GM12878 (cell line): ENCODE measurements at regions of chr1 and their contacts with region 1.

Region 1: GRCh38 chr1:156129706-156130581 is 15.4 kb downstream of the LMNA start:
- DNase-seq: no peak
- ATAC-seq: peak; percentile 29
- H3K4me3 ChIP-seq: no peak overlapping the region
- H3K27ac ChIP-seq: peak overlapping the region; percentile 56
- H3K4me1 ChIP-seq: peaks cover 47% of the 10 kb centered on the region
- H3K27me3 ChIP-seq: no peaks in the 10 kb centered on the region
- CTCF ChIP-seq: peak; percentile 90 to 97 (median 96)
- EP300 ChIP-seq: no peak
- POLR2A ChIP-seq: no peak
- RAD21 ChIP-seq: peak; percentile 96

Region 2: DNA sequence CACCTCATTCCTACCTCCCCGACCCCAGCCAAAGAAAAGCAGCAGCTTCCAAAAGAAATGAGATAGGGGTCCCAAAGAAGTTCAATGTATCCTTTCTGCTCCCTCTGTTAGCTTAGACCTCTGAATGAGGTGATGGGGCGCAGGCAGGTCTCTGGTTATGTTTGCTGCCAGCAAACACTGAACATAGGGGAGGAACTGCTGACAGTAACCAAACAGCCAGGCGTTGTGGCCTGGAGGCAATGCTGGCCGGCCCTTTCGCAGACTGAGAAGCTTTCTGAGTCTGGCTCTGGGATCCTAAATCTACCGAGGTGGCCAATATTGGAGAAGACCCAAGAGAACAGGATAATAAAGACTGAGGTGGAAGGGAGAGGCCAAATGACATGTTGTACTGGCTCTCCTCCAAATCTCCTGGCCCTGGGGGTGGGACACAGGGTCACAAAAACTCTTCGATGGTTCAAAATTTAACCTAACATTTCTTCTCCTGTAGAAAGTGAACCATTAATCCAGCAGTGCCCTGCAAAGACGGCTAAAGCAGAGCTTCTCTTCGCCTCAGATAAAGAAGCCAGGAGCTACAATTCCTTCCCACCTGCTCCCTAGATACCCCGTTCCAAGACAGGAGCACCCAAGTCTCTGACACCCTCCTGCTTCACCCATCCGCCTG is 128.8 kb before region 1 on chr1:
- CTCF ChIA-PET with region 1: no interaction called
- POLR2A ChIA-PET with region 1: no interaction called
- RAD21 ChIA-PET with region 1: no interaction called
- SMC1A ChIA-PET with region 1: no interaction called
- in situ Hi-C with region 1: no loop called
- intact Hi-C with region 1: no loop called
- DNase-seq: no peak
- ATAC-seq: no peak
- H3K4me3 ChIP-seq: no peak overlapping the region
- H3K27ac ChIP-seq: no peak overlapping the region
- H3K4me1 ChIP-seq: no peaks in the 10 kb centered on the region
- H3K27me3 ChIP-seq: no peaks in the 10 kb centered on the region
- CTCF ChIP-seq: no peak
- EP300 ChIP-seq: no peak
- POLR2A ChIP-seq: no peak
- RAD21 ChIP-seq: no peak

Region 3: GRCh38 chr1:156033011-156033410 is 96.9 kb before region 1 on chr1:
- CTCF ChIA-PET with region 1: no interaction called
- POLR2A ChIA-PET with region 1: no interaction called
- RAD21 ChIA-PET with region 1: no interaction called
- SMC1A ChIA-PET with region 1: no interaction called
- in situ Hi-C with region 1: no loop called
- intact Hi-C with region 1: no loop called
- DNase-seq: no peak
- ATAC-seq: no peak
- H3K4me3 ChIP-seq: no peak overlapping the region
- H3K27ac ChIP-seq: no peak overlapping the region
- H3K4me1 ChIP-seq: no peaks in the 10 kb centered on the region
- H3K27me3 ChIP-seq: no peaks in the 10 kb centered on the region
- CTCF ChIP-seq: no peak
- EP300 ChIP-seq: no peak
- POLR2A ChIP-seq: no peak
- RAD21 ChIP-seq: no peak

Region 4: DNA sequence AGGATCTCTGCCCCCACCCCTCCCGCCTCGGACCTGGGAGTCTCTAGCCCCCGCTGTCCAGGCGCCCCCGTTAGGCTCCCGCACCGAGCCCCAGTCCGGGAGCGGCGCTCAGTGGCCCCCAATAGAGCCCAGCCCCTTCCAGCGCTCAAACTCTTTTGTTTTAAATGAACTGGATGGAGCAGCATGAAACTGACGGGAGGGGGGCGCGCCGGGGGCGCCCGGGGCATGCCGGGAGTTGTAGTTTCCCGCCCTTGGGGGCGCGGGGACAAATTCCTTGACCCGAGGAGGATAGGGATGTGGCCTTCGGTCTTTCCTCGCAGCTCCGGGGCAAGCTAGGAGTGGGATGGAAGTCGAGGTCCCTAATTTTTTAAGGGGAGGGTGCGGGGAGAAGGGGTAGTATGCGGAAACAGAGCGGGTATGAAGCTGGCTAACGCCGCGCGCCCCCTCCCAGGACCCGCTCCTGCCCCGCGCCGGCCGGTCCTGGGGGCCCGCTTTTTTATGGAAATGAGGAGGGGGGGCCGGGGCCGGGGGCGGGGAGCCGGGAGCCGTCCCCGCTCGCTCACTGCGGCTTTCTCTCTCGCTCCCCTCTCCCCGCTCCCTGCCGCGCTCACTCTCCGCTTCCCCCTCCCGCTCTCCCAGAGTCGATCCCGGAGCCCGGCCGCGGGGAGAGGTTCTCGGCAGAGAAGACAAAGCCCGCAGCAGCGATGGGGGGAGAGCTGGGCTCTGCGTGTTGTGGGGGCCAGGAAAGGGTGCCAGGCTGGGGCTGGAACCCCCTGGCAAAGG is 47.4 kb before region 1 on chr1 and contains the start of gene MEX3A:
- CTCF ChIA-PET with region 1: interaction called, 1,294 read pairs
- POLR2A ChIA-PET with region 1: no interaction called
- RAD21 ChIA-PET with region 1: interaction called, 695 read pairs
- SMC1A ChIA-PET with region 1: interaction called, 874 read pairs
- in situ Hi-C with region 1: no loop called
- intact Hi-C with region 1: no loop called
- DNase-seq: no peak
- ATAC-seq: peak; percentile 89
- H3K4me3 ChIP-seq: peak within 1 kb of the TSS; percentile 95
- H3K27ac ChIP-seq: no peak within 1 kb of the TSS
- H3K4me1 ChIP-seq: no peaks in the 10 kb centered on the region
- H3K27me3 ChIP-seq: peaks cover 0 to 2% of the 10 kb centered on the region in 2 experiments; a peak in 1 of 4 replicates
- CTCF ChIP-seq: no peak
- EP300 ChIP-seq: no peak
- POLR2A ChIP-seq: no peak
- RAD21 ChIP-seq: no peak
- polyA plus RNA-seq, gene MEX3A: 0.11 to 0.27 TPM

Region 5: GRCh38 chr1:156104065-156104810 is 25.7 kb before region 1 on chr1:
- CTCF ChIA-PET with region 1: interaction called, 1,294 read pairs
- POLR2A ChIA-PET with region 1: interaction called, 89 read pairs
- RAD21 ChIA-PET with region 1: interaction called, 695 read pairs
- SMC1A ChIA-PET with region 1: interaction called, 874 read pairs
- in situ Hi-C with region 1: no loop called
- intact Hi-C with region 1: no loop called
- DNase-seq: no peak
- ATAC-seq: peak; percentile 44
- H3K4me3 ChIP-seq: no peak overlapping the region
- H3K27ac ChIP-seq: peak overlapping the region; percentile 50
- H3K4me1 ChIP-seq: peaks cover 30% of the 10 kb centered on the region
- H3K27me3 ChIP-seq: no peaks in the 10 kb centered on the region
- CTCF ChIP-seq: no peak
- EP300 ChIP-seq: no peak
- POLR2A ChIP-seq: no peak
- RAD21 ChIP-seq: no peak

Region 6: DNA sequence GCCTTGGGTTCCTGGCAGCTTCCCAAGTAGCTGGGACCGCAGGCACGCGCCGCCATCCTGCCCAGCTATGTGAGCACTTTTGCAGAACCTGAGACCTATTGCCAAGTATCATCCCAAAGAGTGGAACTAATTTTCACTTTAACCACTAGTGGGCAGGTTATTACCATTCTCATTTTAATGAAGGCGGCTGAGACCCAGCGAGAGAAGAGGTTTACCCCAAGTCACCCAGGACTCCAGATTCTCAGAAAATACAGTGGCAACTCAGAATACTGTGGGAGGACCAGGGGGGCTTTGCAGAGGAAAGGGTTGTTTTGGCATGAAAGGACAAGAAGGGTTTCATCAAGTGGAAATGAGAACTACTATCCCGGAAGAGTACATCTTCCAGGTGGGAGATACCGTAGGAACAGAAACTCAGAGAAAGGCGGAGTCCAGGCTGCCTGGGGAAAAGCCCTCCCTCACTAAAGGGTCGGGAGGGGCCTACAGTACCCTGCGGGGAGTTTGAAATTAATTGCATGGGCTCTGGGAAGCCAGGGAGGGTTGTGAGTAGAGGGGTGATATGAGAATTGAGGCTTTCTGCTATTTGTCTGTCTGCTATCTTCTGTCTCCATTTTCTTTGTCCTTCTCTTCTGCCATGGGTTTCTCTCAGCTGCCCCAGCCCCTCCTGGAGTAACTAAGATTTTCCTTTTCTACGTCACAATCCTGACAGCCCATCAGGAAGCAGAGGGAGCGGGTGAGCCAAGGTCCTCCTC is 16.2 kb after region 1 on chr1:
- CTCF ChIA-PET with region 1: interaction called, 80 read pairs
- POLR2A ChIA-PET with region 1: interaction called, 10 read pairs
- RAD21 ChIA-PET with region 1: interaction called, 17 read pairs
- SMC1A ChIA-PET with region 1: interaction called, 17 read pairs
- in situ Hi-C with region 1: no loop called
- intact Hi-C with region 1: no loop called
- DNase-seq: peak; percentile 66
- ATAC-seq: peak; percentile 62
- H3K4me3 ChIP-seq: peak overlapping the region; percentile 30
- H3K27ac ChIP-seq: peak overlapping the region; percentile 67
- H3K4me1 ChIP-seq: peaks cover 49% of the 10 kb centered on the region
- H3K27me3 ChIP-seq: no peaks in the 10 kb centered on the region
- CTCF ChIP-seq: peak; percentile 74 to 82 (median 77)
- EP300 ChIP-seq: no peak
- POLR2A ChIP-seq: no peak
- RAD21 ChIP-seq: peak; percentile 94

Region 7: DNA sequence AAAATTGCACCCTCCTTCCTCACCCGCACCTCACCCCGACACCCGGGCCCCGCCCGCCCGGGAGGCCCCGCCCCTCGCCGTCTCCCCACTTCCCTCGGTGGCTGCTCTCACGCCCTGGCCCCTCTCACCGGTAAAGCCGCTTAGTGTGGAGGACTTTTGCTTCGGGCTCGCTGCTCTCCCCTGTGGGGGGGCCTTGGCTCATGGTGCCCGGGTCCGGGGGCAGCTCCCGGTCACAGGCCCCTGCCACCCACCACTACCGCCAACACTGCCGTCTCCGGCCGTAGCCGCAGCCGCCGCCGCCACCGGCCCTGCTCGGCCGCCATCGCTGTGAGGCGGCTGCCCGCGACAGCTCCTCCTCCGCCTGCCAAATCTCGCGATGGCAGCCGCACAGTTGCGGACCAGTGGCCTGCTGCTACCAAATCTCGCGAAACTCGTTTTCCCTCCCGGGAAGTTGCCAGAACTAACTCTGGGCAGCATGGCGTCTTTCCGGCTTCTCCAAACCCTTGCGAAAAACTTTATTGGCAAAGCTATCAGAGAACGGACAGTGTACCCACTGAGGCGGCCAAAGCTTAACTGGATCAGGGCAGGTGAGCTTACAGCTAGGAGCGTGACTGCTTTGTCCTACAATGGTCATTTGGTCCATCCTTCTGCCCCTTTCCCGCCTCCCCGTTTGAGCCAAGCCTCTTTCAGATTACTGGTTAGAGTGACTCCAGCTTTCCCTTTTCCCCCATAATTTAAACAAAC is 152.7 kb after region 1 on chr1 and contains the start of gene SMG5:
- CTCF ChIA-PET with region 1: interaction called, 12 read pairs
- POLR2A ChIA-PET with region 1: interaction called, 3 read pairs
- RAD21 ChIA-PET with region 1: interaction called, 5 read pairs
- SMC1A ChIA-PET with region 1: interaction called, 7 read pairs
- in situ Hi-C with region 1: no loop called
- intact Hi-C with region 1: no loop called
- DNase-seq: peak; percentile 96
- ATAC-seq: peak; percentile 93
- H3K4me3 ChIP-seq: peak within 1 kb of the TSS; percentile 94
- H3K27ac ChIP-seq: peak within 1 kb of the TSS; percentile 86
- H3K4me1 ChIP-seq: peaks cover 15% of the 10 kb centered on the region; the same call in 1 of the 2 replicates
- H3K27me3 ChIP-seq: no peaks in the 10 kb centered on the region
- CTCF ChIP-seq: no peak
- EP300 ChIP-seq: no peak
- POLR2A ChIP-seq: peak; percentile 100
- RAD21 ChIP-seq: no peak
- polyA plus RNA-seq, gene SMG5: 0.76 to 1.9 TPM